Ovary (tissue), 10 donors: ENCODE measurements at regions of chr12 and their contacts with region 1.

Region 1: GRCh38 chr12:82952946-82953345 is 266.2 kb downstream of the TMTC2 start:
- DNase-seq: no peak
- H3K4me3 ChIP-seq: no peak overlapping the region
- H3K27ac ChIP-seq: no peak overlapping the region
- H3K4me1 ChIP-seq: no peaks in the 10 kb centered on the region
- H3K27me3 ChIP-seq: no peaks in the 10 kb centered on the region
- CTCF ChIP-seq: no peak
- EP300 ChIP-seq: no peak
- POLR2A ChIP-seq: no peak

Region 2: GRCh38 chr12:82912406-82912805 is 40.5 kb before region 1 on chr12:
- intact Hi-C with region 1: loop called in 1 of 4 experiments (anchors 1 kb)
- DNase-seq: no peak
- H3K4me3 ChIP-seq: no peak overlapping the region
- H3K27ac ChIP-seq: no peak overlapping the region
- H3K4me1 ChIP-seq: no peaks in the 10 kb centered on the region
- H3K27me3 ChIP-seq: no peaks in the 10 kb centered on the region
- CTCF ChIP-seq: no peak
- EP300 ChIP-seq: no peak
- POLR2A ChIP-seq: no peak

Region 3: DNA sequence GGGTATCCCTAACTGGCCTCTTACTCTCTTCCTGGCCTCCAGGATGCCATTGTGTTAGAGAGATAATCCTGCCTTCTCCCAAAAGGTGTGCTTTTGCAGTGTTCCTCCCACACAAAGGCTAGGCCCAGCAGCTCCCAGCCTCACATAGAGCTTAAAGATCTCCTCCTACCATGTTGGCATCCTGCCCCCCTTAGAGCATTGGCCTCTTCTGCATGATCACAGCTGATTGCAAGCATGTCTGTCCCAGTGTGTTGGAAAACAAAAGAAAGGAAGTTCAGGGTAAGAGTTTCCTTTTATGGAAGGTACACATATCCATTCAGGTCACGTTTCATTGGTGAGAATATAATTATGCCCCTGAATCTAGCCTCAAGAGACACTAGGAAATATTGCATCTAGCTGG is 139.2 kb after region 1 on chr12:
- intact Hi-C with region 1: no loop called
- DNase-seq: no peak
- H3K4me3 ChIP-seq: no peak overlapping the region
- H3K27ac ChIP-seq: no peak overlapping the region
- H3K4me1 ChIP-seq: no peaks in the 10 kb centered on the region
- H3K27me3 ChIP-seq: no peaks in the 10 kb centered on the region
- CTCF ChIP-seq: no peak
- EP300 ChIP-seq: no peak
- POLR2A ChIP-seq: no peak